Dorsolateral prefrontal cortex (tissue), 120 donors: ENCODE measurements at regions of chr6 and their contacts with region 1.

Region 1: GRCh38 chr6:56955171-56956045 is 501 bp downstream of the BEND6 start:
- DNase-seq: peak in 9 of 10 donors; percentile 40 to 86 (median 73)
- H3K4me3 ChIP-seq: peak overlapping the region; percentile 48 to 91 (median 76)
- H3K27ac ChIP-seq: peak overlapping the region; percentile 21 to 93 (median 85)
- H3K27me3 ChIP-seq: no peaks in the 10 kb centered on the region
- CTCF ChIP-seq: peak; percentile 30 to 88 (median 72)

Region 2: GRCh38 chr6:56708810-56709597 is 246.4 kb before region 1 on chr6:
- intact Hi-C with region 1: loop called in 1 of 2 experiments (anchors 10 kb)
- DNase-seq: no peak
- H3K4me3 ChIP-seq: peak overlapping the region in 8 of 59 donors; percentile 0 to 20 (median 11)
- H3K27ac ChIP-seq: peak overlapping the region; percentile 40 to 95 (median 88)
- H3K27me3 ChIP-seq: no peaks in the 10 kb centered on the region
- CTCF ChIP-seq: peak; percentile 46 to 88 (median 73)

Region 3: GRCh38 chr6:56794421-56794820 is 161.0 kb before region 1 on chr6:
- intact Hi-C with region 1: no loop called
- DNase-seq: no peak
- H3K4me3 ChIP-seq: no peak overlapping the region
- H3K27ac ChIP-seq: peak overlapping the region in 3 of 59 donors; percentile 5 to 20 (median 16)
- H3K27me3 ChIP-seq: no peaks in the 10 kb centered on the region
- CTCF ChIP-seq: no peak

Region 4: DNA sequence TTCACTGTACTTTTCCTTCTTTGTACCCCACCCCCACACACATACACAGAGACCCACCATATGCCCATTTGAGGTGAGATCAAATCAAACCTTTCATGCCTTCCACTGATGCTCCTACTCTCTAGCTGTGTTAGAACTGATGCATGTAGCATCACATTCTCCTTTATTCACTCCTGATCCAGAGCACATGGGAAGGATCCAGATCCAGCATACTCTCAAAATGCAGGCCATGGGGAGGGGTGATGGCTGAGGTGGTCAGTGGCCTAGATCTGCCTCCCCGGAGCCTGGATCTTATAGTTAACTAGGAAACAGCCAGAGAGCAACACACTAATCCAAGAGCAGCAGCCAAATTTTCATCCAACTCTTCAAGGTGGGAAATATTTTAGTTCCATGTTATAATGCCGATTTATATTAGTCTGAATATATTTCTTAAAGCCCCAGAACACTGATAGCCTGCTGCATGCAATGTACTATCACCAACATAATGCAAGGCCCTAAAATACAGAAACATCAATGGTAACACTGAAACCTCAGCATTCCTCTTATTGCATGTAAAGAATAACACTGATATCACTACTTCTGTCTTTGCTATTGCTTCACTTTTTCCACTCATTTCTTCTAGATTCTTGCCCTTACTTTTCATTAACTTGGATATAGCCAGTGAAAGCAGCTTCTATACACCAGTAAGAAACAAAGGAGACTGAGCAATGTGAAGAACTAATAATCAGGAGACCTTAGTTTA is 127.3 kb before region 1 on chr6:
- intact Hi-C with region 1: no loop called
- DNase-seq: no peak
- H3K4me3 ChIP-seq: no peak overlapping the region
- H3K27ac ChIP-seq: peak overlapping the region in 8 of 59 donors; percentile 8 to 43 (median 15)
- H3K27me3 ChIP-seq: no peaks in the 10 kb centered on the region
- CTCF ChIP-seq: no peak

Region 5: DNA sequence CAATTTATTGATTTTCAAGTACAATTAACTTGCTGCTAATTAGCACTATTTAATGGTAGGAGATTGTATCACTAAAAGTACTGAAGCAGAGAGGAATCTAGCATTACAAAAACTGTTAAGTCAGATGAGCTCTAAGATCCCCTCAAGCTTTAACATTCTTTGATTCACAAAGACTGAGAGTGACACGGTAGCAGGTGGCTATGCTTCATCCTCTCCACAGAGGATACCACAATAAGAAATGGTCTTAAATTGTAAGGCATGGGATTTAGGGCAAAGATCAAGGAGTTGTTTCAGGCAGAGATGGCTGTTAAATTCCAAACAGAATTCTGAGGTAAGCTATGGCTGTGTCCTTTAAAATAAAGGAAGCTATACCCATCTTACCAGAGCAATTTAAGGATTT is 68.3 kb before region 1 on chr6:
- intact Hi-C with region 1: no loop called
- DNase-seq: no peak
- H3K4me3 ChIP-seq: no peak overlapping the region
- H3K27ac ChIP-seq: no peak overlapping the region
- H3K27me3 ChIP-seq: no peaks in the 10 kb centered on the region
- CTCF ChIP-seq: no peak

Region 6: DNA sequence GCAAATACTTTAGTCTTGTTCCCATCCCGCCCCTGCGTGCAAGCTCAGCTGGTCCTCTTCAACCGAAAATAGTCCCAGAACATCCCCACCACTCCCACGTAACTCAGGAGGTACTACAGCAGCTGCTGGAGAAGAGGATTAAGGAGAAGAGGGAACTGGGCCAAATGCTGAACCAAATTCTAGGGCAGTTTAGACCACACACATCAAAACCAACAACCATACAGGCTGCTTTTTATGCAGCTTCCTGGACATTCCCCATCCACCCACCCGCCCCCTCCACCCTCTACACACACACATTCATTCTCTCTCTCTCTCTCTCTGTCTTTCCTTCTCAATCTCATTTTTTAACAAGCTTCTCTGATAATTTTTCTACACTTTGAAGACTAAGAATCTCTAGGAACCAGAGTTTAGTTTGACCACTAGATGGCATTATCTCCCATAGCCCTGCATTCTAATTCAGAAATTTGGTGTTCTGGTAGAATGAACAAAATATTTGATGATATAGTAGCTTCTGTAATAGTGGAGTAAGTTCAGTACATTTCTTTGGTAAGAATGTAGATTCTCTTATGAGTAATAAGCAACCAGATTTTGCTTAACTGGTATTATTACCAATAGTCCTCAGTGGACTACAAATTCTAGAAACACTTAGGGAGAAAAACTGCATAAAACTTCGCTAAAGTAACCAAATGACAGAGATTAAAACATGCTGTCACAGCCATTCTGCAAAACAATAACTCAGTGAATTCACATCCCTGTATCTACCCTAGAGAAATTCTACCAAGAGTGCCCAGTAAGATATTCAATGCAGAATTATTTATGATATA is 52.6 kb before region 1 on chr6:
- intact Hi-C with region 1: loop called (anchors 2 to 5 kb)
- DNase-seq: peak in 8 of 10 donors; percentile 29 to 75 (median 56)
- H3K4me3 ChIP-seq: peak overlapping the region in 22 of 59 donors; percentile 1 to 43 (median 19)
- H3K27ac ChIP-seq: peak overlapping the region in 5 of 59 donors; percentile 5 to 35 (median 23)
- H3K27me3 ChIP-seq: no peaks in the 10 kb centered on the region
- CTCF ChIP-seq: peak; percentile 60 to 88 (median 76)

Region 7: GRCh38 chr6:57021086-57021720 is 65.8 kb after region 1 on chr6:
- intact Hi-C with region 1: loop called in 1 of 2 experiments (anchors 5 kb)
- DNase-seq: no peak
- H3K4me3 ChIP-seq: no peak overlapping the region
- H3K27ac ChIP-seq: no peak overlapping the region
- H3K27me3 ChIP-seq: no peaks in the 10 kb centered on the region
- CTCF ChIP-seq: peak; percentile 39 to 81 (median 66)

Region 8: GRCh38 chr6:57089687-57090460 is 134.5 kb after region 1 on chr6 and contains the start of gene ZNF451:
- intact Hi-C with region 1: loop called in 1 of 2 experiments (anchors 1 kb)
- DNase-seq: peak; percentile 96 to 99 (median 98)
- H3K4me3 ChIP-seq: peak within 1 kb of the TSS; percentile 40 to 83 (median 71)
- H3K27ac ChIP-seq: peak within 1 kb of the TSS in 58 of 59 donors; percentile 19 to 94 (median 82)
- H3K27me3 ChIP-seq: no peaks in the 10 kb centered on the region
- CTCF ChIP-seq: peak in 41 of 56 donors; percentile 9 to 65 (median 32)
- total RNA-seq, gene ZNF451: 70.0 to 124 (median 97.6) TPM